ENCODE measurements at regions of chr16 and their contacts with region 1.

Region 1: GRCh38 chr16:67672739-67673662 is 6.4 kb downstream of the C16orf86 start:
- DNase-seq: peak; percentile 72
- ATAC-seq: peak; percentile 47 to 50

Region 2: GRCh38 chr16:67660564-67661028 is 12.4 kb before region 1 on chr16 and contains the start of gene PARD6A:
- intact Hi-C with region 1: no loop called
- DNase-seq: peak; percentile 98
- ATAC-seq: peak; percentile 92 to 94
- total RNA-seq, gene PARD6A: 2.5 to 4.8 TPM

Region 3: GRCh38 chr16:67719778-67720144 is 46.8 kb after region 1 on chr16:
- intact Hi-C with region 1: loop called in 1 of 2 experiments (anchors 5 kb)
- DNase-seq: peak; percentile 37
- ATAC-seq: peak; percentile 70 to 75

Region 4: GRCh38 chr16:67731753-67732095 is 58.7 kb after region 1 on chr16:
- intact Hi-C with region 1: no loop called
- DNase-seq: no peak
- ATAC-seq: no peak

Region 5: DNA sequence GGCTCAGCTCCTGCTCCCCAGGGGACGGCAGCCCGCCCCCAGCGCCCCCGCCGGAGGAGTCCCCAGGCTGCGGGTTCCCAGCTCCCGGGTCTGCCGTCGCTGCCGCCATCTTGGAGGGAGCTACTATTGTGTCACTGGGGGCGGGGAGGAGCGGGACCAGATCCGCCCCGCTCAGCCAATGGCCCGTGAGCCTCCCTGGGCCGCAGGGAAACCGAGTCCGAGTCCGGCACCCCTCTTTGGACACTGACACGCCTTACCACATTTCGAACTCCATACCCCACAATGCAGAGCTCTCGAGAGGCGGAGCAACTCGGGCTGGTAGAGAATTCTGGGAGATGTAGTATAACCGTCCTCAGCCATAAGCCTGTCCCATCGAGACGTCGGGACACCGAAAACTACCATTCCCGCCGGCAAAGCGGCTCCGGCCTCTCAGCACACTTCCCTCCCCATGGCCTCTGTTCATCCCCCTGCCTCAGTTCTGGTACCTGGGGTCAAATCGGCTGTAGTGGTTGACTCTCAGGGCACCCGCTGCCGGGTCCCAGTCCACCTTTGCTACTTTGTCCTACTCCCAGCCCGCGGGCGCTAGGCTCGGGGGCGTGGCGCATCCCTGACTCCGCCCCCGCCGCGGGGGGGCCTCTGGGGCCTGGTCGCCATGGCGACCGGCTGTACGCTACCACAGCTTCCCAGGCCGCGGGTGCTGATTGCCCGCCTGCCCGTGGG is 133.6 kb after region 1 on chr16 and contains the starts of genes RANBP10 and TSNAXIP1:
- intact Hi-C with region 1: loop called (anchors 5 to 10 kb)
- DNase-seq: peak; percentile 98
- ATAC-seq: peak; percentile 98
- total RNA-seq, gene RANBP10: 10.9 to 14.3 TPM
- total RNA-seq, gene TSNAXIP1: 0.55 to 0.74 TPM

Region 6: GRCh38 chr16:67816240-67817031 is 143.4 kb after region 1 on chr16:
- intact Hi-C with region 1: loop called in 1 of 2 experiments (anchors 10 kb)
- DNase-seq: peak; percentile 87
- ATAC-seq: peak; percentile 95

Region 7: DNA sequence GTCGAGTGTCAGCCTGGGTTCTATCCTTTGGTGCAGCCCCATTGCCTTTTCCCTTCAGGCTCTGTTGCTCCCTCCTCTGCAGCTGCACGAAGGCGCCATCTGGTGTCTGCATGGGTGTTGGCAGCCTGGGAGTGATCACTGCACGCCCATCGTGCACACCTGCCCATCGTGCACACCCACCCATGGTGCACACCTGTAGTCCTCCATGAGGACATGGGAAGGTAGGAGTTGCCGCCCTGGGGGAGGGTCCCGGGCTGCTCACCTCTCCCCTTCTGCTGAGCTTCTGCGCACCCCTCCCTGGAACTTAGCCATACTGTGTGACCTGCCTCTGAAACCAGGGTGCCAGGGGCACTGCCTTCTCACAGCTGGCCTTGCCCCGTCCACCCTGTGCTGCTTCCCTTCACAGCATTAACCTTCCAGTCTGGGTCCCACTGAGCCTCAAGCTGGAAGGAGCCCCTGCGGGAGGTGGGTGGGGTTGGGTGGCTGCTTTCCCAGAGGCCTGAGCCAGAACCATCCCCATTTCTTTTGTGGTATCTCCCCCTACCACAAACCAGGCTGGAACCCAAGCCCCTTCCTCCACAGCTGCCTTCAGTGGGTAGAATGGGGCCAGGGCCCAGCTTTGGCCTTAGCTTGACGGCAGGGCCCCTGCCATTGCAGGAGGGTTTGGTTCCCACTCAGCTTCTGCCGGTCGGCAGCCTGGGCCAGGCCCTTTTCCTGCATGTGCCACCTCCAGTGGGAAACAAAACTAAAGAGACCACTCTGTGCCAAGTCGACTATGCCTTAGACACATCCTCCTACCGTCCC is 255.8 kb after region 1 on chr16:
- intact Hi-C with region 1: loop called in 1 of 2 experiments (anchors 10 kb)
- DNase-seq: peak; percentile 69
- ATAC-seq: peak; percentile 63 to 68

Measured in left cardiac atrium (tissue), 4 donors.